ENCODE measurements at regions of chr2 and their contacts with region 1.

Region 1: GRCh38 chr2:41879235-41879916 is 168.4 kb upstream of the PKDCC start:
- DNase-seq: no peak
- ATAC-seq: peak; percentile 52
- H3K4me3 Mint-ChIP-seq: no peak overlapping the region
- H3K27ac Mint-ChIP-seq: no peak overlapping the region
- H3K4me1 Mint-ChIP-seq: peaks cover 18% of the 10 kb centered on the region
- H3K27me3 Mint-ChIP-seq: no peaks in the 10 kb centered on the region; the same call in 1 of the 2 replicates
- CTCF ChIP-seq: no peak

Region 2: DNA sequence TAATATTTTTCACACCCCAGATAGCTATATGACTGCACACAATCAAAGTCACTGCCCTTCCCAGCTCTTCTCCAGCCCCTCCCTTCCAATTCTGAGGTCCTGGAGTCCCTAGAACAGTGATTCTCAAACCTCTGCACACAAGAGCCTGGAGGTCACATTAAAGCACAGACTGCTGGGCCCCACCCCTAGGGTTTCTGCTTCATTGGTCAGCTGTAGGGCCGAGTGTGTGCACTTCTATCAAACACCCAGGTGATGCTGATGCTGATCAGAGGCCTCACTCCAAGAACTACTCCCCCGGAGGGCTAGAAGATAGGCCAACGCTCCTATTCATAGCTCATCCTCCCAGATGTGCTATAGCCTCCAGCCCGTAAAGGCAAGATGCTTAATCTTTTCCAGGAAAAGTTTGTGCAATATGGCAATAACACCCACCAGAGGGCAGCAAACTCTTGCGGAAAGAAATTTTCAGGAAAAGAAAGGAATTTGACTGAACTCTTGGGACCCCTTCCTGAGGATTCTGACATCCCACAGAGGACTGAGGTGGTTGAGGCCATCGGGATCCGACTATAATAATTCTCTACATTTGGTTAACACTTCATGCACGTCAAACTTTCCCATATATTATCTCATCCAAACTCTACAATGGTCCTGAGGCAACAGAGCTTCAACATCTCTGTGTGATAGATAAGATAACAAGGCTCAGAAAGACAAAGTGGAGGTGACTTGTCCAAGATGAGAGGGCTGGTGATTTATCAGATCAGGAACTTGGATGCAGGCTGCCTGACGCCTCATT is 25.8 kb before region 1 on chr2:
- CTCF ChIA-PET with region 1: interaction called, 14 read pairs
- POLR2A ChIA-PET with region 1: no interaction called
- DNase-seq: peak; percentile 70
- ATAC-seq: peak; percentile 77
- H3K4me3 Mint-ChIP-seq: no peak overlapping the region
- H3K27ac Mint-ChIP-seq: no peak overlapping the region
- H3K4me1 Mint-ChIP-seq: peaks cover 6% of the 10 kb centered on the region
- H3K27me3 Mint-ChIP-seq: peaks cover 3% of the 10 kb centered on the region; the same call in 1 of the 2 replicates
- CTCF ChIP-seq: peak; percentile 65

Region 3: GRCh38 chr2:41899189-41899588 is 19.8 kb after region 1 on chr2:
- CTCF ChIA-PET with region 1: no interaction called
- POLR2A ChIA-PET with region 1: no interaction called
- DNase-seq: no peak
- ATAC-seq: no peak
- H3K4me3 Mint-ChIP-seq: no peak overlapping the region
- H3K27ac Mint-ChIP-seq: no peak overlapping the region
- H3K4me1 Mint-ChIP-seq: no peaks in the 10 kb centered on the region
- H3K27me3 Mint-ChIP-seq: no peaks in the 10 kb centered on the region
- CTCF ChIP-seq: no peak

Measured in WTC11 (cell line).